Heart left ventricle (tissue), 16 donors: ENCODE measurements at regions of chr11 and their contacts with region 1.

Region 1: GRCh38 chr11:86938900-86939880 is 16.0 kb downstream of the FZD4 start:
- DNase-seq: no peak
- ATAC-seq: peak in 2 of 4 donors; percentile 34 to 37
- H3K4me3 ChIP-seq: peak overlapping the region in 5 of 12 donors; percentile 20 to 43 (median 31)
- H3K27ac ChIP-seq: peak overlapping the region; percentile 68 to 86 (median 82)
- H3K4me1 ChIP-seq: peaks cover 0 to 80% (median 53%) of the 10 kb centered on the region in 12 donors
- H3K27me3 ChIP-seq: no peaks in the 10 kb centered on the region
- CTCF ChIP-seq: peak; percentile 62 to 75 (median 70)
- POLR2A ChIP-seq: no peak

Region 2: DNA sequence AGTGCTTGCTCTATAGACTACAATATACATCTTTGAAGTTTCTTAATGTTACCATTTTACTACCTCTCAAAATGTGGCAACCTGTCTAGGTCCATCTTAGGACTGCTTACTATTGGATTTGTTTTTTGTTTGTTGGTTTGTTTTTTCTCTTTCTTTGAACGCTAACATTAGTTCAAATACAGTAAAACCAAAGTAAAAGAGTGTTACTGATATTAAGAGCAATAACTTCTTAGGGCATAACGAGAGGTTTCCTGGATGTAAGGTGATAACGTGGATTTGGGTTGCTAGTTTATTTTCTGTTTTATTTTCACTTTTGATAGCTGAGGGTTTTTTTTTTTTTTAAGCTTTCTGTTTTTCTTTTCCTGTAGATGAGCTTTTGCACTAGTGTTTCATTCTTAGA is 142.2 kb after region 1 on chr11:
- intact Hi-C with region 1: loop called in 1 of 10 experiments (anchors 10 kb)
- DNase-seq: no peak
- ATAC-seq: no peak
- H3K4me3 ChIP-seq: peak overlapping the region in 7 of 12 donors; percentile 5 to 44 (median 25)
- H3K27ac ChIP-seq: peak overlapping the region in 2 of 12 donors; percentile 11 to 37
- H3K4me1 ChIP-seq: peaks cover 0 to 20% (median 0%) of the 10 kb centered on the region in 12 donors
- H3K27me3 ChIP-seq: no peaks in the 10 kb centered on the region
- CTCF ChIP-seq: no peak
- POLR2A ChIP-seq: no peak

Region 3: GRCh38 chr11:87281496-87281895 is 342.3 kb after region 1 on chr11:
- intact Hi-C with region 1: loop called in 3 of 10 experiments (anchors 5 kb)
- DNase-seq: no peak
- ATAC-seq: peak; percentile 65 to 84 (median 80)
- H3K4me3 ChIP-seq: no peak overlapping the region
- H3K27ac ChIP-seq: peak overlapping the region in 2 of 12 donors; percentile 10 to 27
- H3K4me1 ChIP-seq: peaks cover 0 to 20% (median 1%) of the 10 kb centered on the region in 12 donors
- H3K27me3 ChIP-seq: no peaks in the 10 kb centered on the region
- CTCF ChIP-seq: peak in 11 of 12 donors; percentile 12 to 64 (median 47)
- POLR2A ChIP-seq: no peak

Region 4: GRCh38 chr11:87352759-87353707 is 413.8 kb after region 1 on chr11:
- intact Hi-C with region 1: loop called in 1 of 10 experiments (anchors 5 kb)
- DNase-seq: peak; percentile 80 to 92 (median 85)
- ATAC-seq: peak; percentile 86 to 96 (median 94)
- H3K4me3 ChIP-seq: no peak overlapping the region
- H3K27ac ChIP-seq: peak overlapping the region in 4 of 12 donors; percentile 3 to 62 (median 16)
- H3K4me1 ChIP-seq: peaks cover 0 to 50% (median 18%) of the 10 kb centered on the region in 12 donors
- H3K27me3 ChIP-seq: no peaks in the 10 kb centered on the region
- CTCF ChIP-seq: peak; percentile 96 to 100 (median 99)
- POLR2A ChIP-seq: no peak